PC-3 (cell line): ENCODE measurements at regions of chr4 and their contacts with region 1.

Region 1: GRCh38 chr4:162497564-162498167 is 333.9 kb upstream of the FSTL5 start:
- DNase-seq: peak; percentile 42
- ATAC-seq: peak; percentile 38
- H3K4me3 ChIP-seq: no peak overlapping the region
- H3K27ac ChIP-seq: no peak overlapping the region
- H3K4me1 ChIP-seq: no peaks in the 10 kb centered on the region
- H3K27me3 ChIP-seq: no peaks in the 10 kb centered on the region
- CTCF ChIP-seq: peak; percentile 72

Region 2: GRCh38 chr4:161817822-161818412 is 679.7 kb before region 1 on chr4:
- CTCF ChIA-PET with region 1: no interaction called
- POLR2A ChIA-PET with region 1: no interaction called
- intact Hi-C with region 1: no loop called
- DNase-seq: no peak
- ATAC-seq: no peak
- H3K4me3 ChIP-seq: no peak overlapping the region
- H3K27ac ChIP-seq: no peak overlapping the region
- H3K4me1 ChIP-seq: peaks cover 18% of the 10 kb centered on the region
- H3K27me3 ChIP-seq: no peaks in the 10 kb centered on the region
- CTCF ChIP-seq: no peak

Region 3: GRCh38 chr4:162535121-162535520 is 37.5 kb after region 1 on chr4:
- CTCF ChIA-PET with region 1: no interaction called
- POLR2A ChIA-PET with region 1: no interaction called
- intact Hi-C with region 1: no loop called
- DNase-seq: no peak
- ATAC-seq: no peak
- H3K4me3 ChIP-seq: no peak overlapping the region
- H3K27ac ChIP-seq: no peak overlapping the region
- H3K4me1 ChIP-seq: no peaks in the 10 kb centered on the region
- H3K27me3 ChIP-seq: no peaks in the 10 kb centered on the region
- CTCF ChIP-seq: no peak; the same call in 1 of the 2 replicates

Region 4: DNA sequence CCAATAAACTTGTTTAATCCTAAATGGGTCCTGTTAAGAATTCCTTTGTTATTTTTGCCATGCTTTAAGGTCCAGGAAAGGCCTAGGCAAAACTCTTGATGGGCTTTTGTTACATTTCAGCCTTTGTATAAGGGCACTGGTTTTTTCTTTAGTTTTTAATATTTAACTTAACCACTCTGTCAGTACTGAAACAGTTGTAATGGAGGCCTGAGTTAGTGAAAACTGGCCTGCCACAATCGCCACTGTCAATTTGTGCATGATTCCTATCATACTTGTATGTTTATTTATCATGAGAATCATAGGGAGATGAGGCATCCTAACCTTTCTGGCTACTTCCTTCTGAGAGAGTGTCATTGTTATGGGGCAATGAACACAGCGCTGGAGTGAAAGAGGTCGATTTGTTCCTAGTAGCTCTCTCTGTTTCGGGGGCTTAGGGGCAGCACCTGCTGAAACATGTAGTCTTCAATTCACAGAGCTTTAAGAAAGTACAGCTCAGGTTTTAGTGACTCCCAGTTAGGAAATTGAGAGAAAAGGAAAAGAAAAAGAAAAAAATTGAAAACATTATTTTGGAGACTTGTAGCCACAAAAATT is 59.9 kb after region 1 on chr4:
- CTCF ChIA-PET with region 1: no interaction called
- POLR2A ChIA-PET with region 1: no interaction called
- intact Hi-C with region 1: no loop called
- DNase-seq: no peak
- ATAC-seq: no peak
- H3K4me3 ChIP-seq: no peak overlapping the region
- H3K27ac ChIP-seq: no peak overlapping the region
- H3K4me1 ChIP-seq: no peaks in the 10 kb centered on the region
- H3K27me3 ChIP-seq: no peaks in the 10 kb centered on the region
- CTCF ChIP-seq: no peak

Region 5: GRCh38 chr4:162959046-162959445 is 461.4 kb after region 1 on chr4:
- CTCF ChIA-PET with region 1: no interaction called
- POLR2A ChIA-PET with region 1: no interaction called
- intact Hi-C with region 1: loop called (anchors 2 kb)
- DNase-seq: peak; percentile 4
- ATAC-seq: peak; percentile 59
- H3K4me3 ChIP-seq: no peak overlapping the region
- H3K27ac ChIP-seq: no peak overlapping the region
- H3K4me1 ChIP-seq: no peaks in the 10 kb centered on the region
- H3K27me3 ChIP-seq: no peaks in the 10 kb centered on the region
- CTCF ChIP-seq: no peak

Region 6: GRCh38 chr4:163042306-163042705 is 544.6 kb after region 1 on chr4:
- CTCF ChIA-PET with region 1: no interaction called
- POLR2A ChIA-PET with region 1: no interaction called
- intact Hi-C with region 1: loop called (anchors 1 kb)
- DNase-seq: no peak
- ATAC-seq: no peak
- H3K4me3 ChIP-seq: no peak overlapping the region
- H3K27ac ChIP-seq: no peak overlapping the region
- H3K4me1 ChIP-seq: no peaks in the 10 kb centered on the region
- H3K27me3 ChIP-seq: no peaks in the 10 kb centered on the region
- CTCF ChIP-seq: no peak